MCF 10A (cell line): ENCODE measurements at regions of chr11 and their contacts with region 1.

Region 1: GRCh38 chr11:119666463-119667131 is 62.4 kb downstream of the NECTIN1 start:
- DNase-seq: peak; percentile 78
- H3K4me3 Mint-ChIP-seq: no peak overlapping the region
- H3K27ac Mint-ChIP-seq: no peak overlapping the region
- H3K4me1 Mint-ChIP-seq: peaks cover 14% of the 10 kb centered on the region
- H3K27me3 Mint-ChIP-seq: no peaks in the 10 kb centered on the region
- CTCF ChIP-seq: peak; percentile 98

Region 2: GRCh38 chr11:119481021-119481666 is 185.5 kb before region 1 on chr11:
- CTCF ChIA-PET with region 1: interaction called, 7 read pairs
- POLR2A ChIA-PET with region 1: no interaction called
- intact Hi-C with region 1: loop called (anchors 1 kb)
- DNase-seq: peak; percentile 80
- H3K4me3 Mint-ChIP-seq: no peak overlapping the region
- H3K27ac Mint-ChIP-seq: peak overlapping the region; percentile 27
- H3K4me1 Mint-ChIP-seq: peaks cover 7% of the 10 kb centered on the region
- H3K27me3 Mint-ChIP-seq: peaks cover 14% of the 10 kb centered on the region
- CTCF ChIP-seq: peak; percentile 98

Region 3: DNA sequence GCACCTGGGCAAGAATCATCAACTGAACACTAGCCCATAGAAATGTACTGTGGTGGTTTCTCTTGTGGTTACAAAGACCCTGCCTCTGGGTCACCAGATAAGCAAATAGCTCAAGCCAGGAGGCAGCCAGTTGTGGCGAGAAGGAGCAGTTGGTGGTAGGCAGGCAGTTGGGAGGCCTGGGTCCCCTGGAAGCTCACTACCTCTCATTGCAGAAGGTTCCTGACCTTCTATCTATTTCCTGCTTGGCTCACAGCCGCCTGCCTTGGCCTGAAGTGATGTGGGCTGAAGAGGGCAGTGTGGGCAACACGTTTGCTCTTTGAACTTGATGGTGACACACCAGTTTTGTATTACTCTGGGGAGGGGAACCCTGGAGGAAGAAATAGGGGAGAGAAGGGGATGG is 27.7 kb after region 1 on chr11:
- CTCF ChIA-PET with region 1: no interaction called
- POLR2A ChIA-PET with region 1: interaction called, 4 read pairs
- intact Hi-C with region 1: loop called (anchors 1 kb)
- DNase-seq: peak; percentile 61
- H3K4me3 Mint-ChIP-seq: no peak overlapping the region
- H3K27ac Mint-ChIP-seq: peak overlapping the region; percentile 93
- H3K4me1 Mint-ChIP-seq: peaks cover 80% of the 10 kb centered on the region
- H3K27me3 Mint-ChIP-seq: no peaks in the 10 kb centered on the region
- CTCF ChIP-seq: peak; percentile 10

Region 4: GRCh38 chr11:120013325-120014270 is 347.0 kb after region 1 on chr11:
- CTCF ChIA-PET with region 1: interaction called, 4 read pairs
- POLR2A ChIA-PET with region 1: no interaction called
- intact Hi-C with region 1: loop called (anchors 1 kb)
- DNase-seq: peak; percentile 53
- H3K4me3 Mint-ChIP-seq: no peak overlapping the region
- H3K27ac Mint-ChIP-seq: no peak overlapping the region
- H3K4me1 Mint-ChIP-seq: no peaks in the 10 kb centered on the region
- H3K27me3 Mint-ChIP-seq: peaks cover 76% of the 10 kb centered on the region
- CTCF ChIP-seq: peak; percentile 79

Region 5: GRCh38 chr11:120172054-120172911 is 505.7 kb after region 1 on chr11:
- CTCF ChIA-PET with region 1: no interaction called
- POLR2A ChIA-PET with region 1: no interaction called
- intact Hi-C with region 1: loop called (anchors 1 kb)
- DNase-seq: peak; percentile 70
- H3K4me3 Mint-ChIP-seq: no peak overlapping the region
- H3K27ac Mint-ChIP-seq: no peak overlapping the region
- H3K4me1 Mint-ChIP-seq: no peaks in the 10 kb centered on the region
- H3K27me3 Mint-ChIP-seq: peaks cover 58% of the 10 kb centered on the region
- CTCF ChIP-seq: peak; percentile 87